GM23248 (cell line): ENCODE measurements at regions of chr22 and their contacts with region 1.

Region 1: DNA sequence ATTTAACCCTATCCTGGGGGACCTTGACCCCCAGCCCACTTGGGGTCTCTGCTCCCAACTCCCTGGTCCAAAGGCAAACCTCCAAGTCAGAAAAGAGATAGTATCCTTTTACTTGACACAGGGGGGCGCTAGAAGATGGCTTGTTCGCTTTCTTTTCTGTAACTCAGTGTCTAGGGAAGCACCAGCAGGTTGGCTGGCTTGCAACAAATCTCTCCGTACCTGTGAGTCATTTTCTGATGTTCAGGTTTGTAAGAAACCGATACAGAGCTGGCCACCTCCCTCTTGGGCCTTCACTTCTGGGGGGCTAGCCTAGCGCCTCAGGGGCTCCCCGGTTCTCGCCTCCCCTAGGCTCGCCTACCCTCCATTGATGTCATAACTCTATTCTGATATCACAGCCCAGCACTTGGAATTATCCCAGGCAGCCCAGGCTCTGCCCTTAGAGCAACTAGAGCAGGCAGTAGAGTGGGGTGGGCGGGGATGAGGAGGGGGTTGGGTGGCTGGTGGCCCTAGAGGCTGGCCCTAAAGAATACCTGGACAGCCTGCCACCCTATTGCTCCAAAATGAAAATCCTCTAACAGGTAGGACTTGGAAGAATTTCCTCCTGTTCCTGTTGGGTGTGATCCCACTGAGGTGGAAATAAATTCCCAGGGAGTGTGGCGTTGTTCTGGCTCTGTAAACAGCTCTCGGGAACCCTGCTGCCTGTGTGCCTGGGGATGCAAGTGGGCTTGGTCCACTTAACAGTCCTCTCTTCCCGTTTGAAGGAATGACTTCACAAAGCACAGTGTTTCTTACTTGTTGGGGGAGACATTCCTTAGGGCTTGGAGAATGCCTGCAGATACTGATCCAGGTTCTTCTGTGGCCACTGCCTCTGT is 69.4 kb downstream of the OSBP2 start:
- DNase-seq: peak; percentile 87
- H3K4me3 ChIP-seq: no peak overlapping the region
- H3K27ac ChIP-seq: no peak overlapping the region
- H3K4me1 ChIP-seq: no peaks in the 10 kb centered on the region
- H3K27me3 ChIP-seq: no peaks in the 10 kb centered on the region

Region 2: DNA sequence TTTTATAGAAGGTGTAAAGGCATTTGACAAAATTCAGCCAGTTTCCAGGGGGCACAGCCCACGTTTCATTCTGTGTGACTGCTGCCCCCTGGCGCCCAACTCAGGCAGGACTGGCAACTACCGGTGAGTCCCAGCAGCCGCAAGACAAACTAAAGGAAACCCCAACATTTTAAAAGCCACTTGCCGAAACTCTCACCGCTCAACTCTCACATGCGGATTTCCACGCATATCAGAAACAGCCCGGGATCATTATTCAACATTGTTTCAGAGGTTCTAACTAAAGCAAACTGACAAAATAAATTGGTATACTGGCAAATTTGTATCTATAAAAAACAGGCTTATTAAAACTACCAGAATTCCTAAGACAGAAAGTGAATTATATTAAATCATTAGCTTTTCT is 156.4 kb after region 1 on chr22:
- in situ Hi-C with region 1: loop called (anchors 5 kb)
- DNase-seq: peak; percentile 73
- H3K4me3 ChIP-seq: peak overlapping the region; percentile 61
- H3K27ac ChIP-seq: no peak overlapping the region
- H3K4me1 ChIP-seq: peaks cover 14% of the 10 kb centered on the region
- H3K27me3 ChIP-seq: no peaks in the 10 kb centered on the region

Region 3: GRCh38 chr22:30943368-30943767 is 179.3 kb after region 1 on chr22:
- in situ Hi-C with region 1: no loop called
- DNase-seq: no peak
- H3K4me3 ChIP-seq: no peak overlapping the region
- H3K27ac ChIP-seq: no peak overlapping the region
- H3K4me1 ChIP-seq: no peaks in the 10 kb centered on the region
- H3K27me3 ChIP-seq: no peaks in the 10 kb centered on the region